ENCODE measurements at regions of chr1 and their contacts with region 1.

Region 1: DNA sequence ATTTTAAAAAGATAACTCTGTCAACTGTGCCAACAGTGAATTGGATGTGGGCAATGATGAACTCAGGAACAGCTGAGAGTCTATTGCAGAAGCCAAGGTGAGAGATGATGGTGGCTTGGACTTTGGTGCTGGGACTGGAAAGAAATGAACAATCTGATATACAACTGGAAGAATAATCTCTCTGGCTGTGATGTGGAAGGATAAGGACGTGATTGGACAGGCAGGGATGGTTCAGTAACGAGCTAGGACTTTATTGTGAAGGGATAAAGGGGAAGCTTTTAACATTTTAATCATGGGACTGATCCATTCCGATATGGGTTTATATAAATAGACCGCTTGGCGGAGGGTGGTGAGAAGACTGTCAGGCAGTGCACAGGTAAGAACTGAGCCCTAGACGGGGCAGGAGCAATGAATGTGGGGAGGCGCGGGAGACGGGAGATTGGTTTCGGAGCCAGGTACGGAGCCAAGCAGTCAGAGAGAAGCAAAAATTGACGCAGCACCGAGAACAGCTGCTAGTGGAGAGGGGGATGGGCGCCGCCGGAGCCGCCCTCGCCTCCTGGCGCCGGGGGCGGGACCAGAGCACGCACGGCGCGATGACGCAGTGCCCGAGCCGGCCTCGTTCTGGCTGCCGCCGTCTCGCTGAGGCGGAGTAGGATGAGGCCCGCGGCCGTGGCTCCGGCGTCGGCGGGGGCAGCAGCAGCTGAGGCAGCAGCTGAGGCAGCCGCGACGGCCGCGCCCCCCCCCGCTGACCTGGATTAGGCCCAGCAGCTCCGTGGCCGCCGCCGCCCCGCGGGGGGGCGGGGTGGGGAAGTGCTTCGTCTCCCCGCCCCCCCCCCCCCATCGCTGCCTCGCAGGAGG is at the start of gene RNF11:
- DNase-seq: peak; percentile 90
- H3K4me3 Mint-ChIP-seq: peak within 1 kb of the TSS; percentile 96
- H3K27ac Mint-ChIP-seq: peak within 1 kb of the TSS; percentile 88
- H3K4me1 Mint-ChIP-seq: peaks cover 13% of the 10 kb centered on the region
- H3K27me3 Mint-ChIP-seq: peaks cover 2% of the 10 kb centered on the region
- total RNA-seq, gene RNF11: 28.4 and 29.6 TPM in 2 replicates

Region 2: DNA sequence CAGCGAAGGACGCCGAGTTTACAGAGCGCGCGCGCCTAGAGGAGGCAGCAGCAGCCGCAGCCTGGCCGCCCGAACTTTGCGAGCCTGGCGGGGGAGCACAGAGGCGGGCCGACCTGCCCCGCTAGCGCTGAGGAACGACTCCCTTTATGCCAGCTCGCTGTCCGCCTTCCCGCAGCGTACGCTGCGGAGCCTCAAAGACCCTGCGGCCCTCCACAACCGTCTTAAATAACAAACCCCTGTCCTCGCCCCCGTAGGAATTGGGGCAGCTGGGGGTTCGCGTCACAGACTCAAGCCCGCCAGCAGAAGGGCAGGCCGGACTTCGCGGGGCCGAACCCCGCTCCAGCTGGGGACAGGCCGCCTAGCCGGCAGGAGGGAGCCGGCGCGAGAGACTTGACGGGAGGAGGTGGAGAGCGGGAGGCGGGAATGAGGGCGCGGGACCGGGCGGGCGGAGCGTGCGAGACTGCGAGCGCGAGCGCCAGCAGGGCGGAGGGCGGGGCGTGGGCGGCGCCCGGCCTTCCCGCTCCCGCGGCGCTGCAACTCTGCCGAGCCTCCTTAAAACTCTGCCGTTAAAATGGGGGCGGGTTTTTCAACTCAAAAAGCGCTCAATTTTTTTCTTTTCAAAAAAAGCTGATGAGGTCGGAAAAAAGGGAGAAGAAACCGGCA is 267.6 kb before region 1 on chr1:
- intact Hi-C with region 1: loop called (anchors 5 kb)
- DNase-seq: peak; percentile 82
- H3K4me3 Mint-ChIP-seq: peak overlapping the region; percentile 99
- H3K27ac Mint-ChIP-seq: peak overlapping the region; percentile 98
- H3K4me1 Mint-ChIP-seq: peaks cover 39% of the 10 kb centered on the region
- H3K27me3 Mint-ChIP-seq: peaks cover 10% of the 10 kb centered on the region

Region 3: DNA sequence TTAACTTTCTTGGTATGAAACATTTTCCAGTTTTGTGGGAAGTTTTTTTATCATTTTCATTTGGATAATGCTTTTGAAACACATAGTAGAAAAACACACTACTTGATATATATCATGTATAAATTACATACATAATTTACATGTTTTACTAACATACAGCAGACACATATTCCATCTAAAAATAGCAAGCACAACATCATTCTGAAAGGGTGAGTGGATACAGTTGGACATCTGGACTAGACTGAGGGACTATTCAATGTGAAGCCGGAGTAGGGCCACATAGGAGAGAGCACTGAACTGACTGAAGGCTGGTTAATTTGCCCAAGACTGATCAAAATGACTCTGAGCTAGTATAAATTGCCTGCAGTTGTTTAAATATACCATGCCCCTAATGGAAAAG is 254.2 kb before region 1 on chr1:
- intact Hi-C with region 1: no loop called
- DNase-seq: no peak
- H3K4me3 Mint-ChIP-seq: no peak overlapping the region
- H3K27ac Mint-ChIP-seq: no peak overlapping the region
- H3K4me1 Mint-ChIP-seq: peaks cover 15% of the 10 kb centered on the region
- H3K27me3 Mint-ChIP-seq: peaks cover 61% of the 10 kb centered on the region

Region 4: DNA sequence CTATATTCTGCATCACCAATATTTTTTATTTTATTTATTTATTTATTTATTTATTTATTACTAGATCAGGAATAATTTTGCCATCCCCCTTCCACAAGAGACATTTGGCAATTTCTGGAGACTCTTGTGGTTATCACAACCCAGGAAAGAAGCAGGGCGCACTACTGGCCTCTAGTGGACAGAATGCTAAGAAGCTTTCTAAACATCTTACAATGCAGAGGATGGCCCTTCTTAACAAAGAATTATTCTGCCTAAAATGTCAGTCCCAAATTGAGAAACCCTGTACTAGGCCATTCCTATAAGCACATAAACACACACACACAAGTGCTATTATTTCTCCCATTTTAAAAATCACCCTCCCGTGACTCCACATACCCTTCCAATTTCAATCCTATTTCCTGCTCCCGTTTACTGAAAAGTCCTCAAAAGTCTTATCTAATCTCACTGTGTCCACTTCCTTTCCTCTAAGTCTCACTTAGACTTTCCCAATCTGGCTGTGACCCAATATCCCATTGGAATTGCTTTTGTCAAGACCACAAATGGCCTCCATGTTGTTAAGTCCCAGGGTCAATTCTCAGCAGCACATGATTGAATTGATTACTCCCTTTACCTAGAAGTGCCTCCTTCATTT is 43.6 kb before region 1 on chr1:
- intact Hi-C with region 1: loop called (anchors 2 kb)
- DNase-seq: peak; percentile 19
- H3K4me3 Mint-ChIP-seq: no peak overlapping the region
- H3K27ac Mint-ChIP-seq: no peak overlapping the region
- H3K4me1 Mint-ChIP-seq: no peaks in the 10 kb centered on the region
- H3K27me3 Mint-ChIP-seq: peaks cover 17% of the 10 kb centered on the region

Region 5: GRCh38 chr1:51284487-51284954 is 48.6 kb after region 1 on chr1:
- intact Hi-C with region 1: loop called (anchors 5 kb)
- DNase-seq: no peak
- H3K4me3 Mint-ChIP-seq: no peak overlapping the region
- H3K27ac Mint-ChIP-seq: peak overlapping the region; percentile 10
- H3K4me1 Mint-ChIP-seq: peaks cover 24% of the 10 kb centered on the region
- H3K27me3 Mint-ChIP-seq: peaks cover 4% of the 10 kb centered on the region

Region 6: DNA sequence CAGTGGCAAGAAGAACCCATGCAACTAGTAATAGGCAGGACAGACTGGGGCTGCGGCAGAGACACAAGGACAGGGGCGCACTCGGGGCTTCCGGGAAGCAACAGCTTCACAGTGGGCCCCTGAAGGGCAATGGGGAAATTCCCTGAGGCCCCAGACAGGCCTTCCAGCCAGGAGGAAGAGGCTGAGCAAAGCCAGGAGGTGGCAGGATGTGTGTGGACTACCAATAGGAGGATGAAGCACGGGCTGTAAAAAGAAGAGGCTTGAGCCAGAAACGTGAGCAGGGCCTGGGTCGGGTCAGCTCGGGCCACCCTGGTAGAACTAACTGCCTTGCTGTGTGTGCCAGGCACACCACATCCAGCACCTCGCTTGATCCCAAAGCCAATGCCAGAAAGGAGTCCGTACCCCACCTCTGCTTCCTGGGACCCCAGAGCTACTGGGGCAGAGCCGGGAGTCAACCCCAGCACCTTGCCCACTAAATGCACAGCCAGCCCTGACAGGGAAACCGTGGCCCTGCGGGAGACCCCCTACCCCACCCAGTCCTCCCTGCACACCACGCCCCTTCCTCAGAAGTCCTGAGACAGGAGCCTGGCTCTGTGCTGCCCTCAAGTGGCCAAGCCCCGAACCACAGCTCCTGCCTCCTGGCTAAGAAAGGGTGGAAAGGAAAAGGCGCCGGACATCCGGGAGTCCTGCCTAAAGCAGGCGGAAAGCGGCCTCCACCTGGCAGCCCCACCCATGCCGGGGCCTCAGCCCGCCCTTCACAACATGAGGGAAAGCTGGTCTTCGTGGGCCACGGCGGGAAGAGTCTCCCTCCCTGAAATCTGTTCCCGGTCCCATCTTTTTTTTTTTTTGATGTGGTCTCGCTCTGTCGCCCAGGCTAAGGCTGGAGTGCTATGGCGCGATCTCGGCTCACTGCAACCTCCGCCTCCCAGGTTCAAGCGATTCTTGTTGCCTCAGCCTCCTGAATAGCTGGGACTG is 60.8 kb after region 1 on chr1:
- intact Hi-C with region 1: loop called (anchors 2 kb)
- DNase-seq: peak; percentile 69
- H3K4me3 Mint-ChIP-seq: peak overlapping the region; percentile 69
- H3K27ac Mint-ChIP-seq: peak overlapping the region; percentile 76
- H3K4me1 Mint-ChIP-seq: peaks cover 17% of the 10 kb centered on the region
- H3K27me3 Mint-ChIP-seq: peaks cover 2% of the 10 kb centered on the region

Region 7: GRCh38 chr1:51729156-51729823 is 493.4 kb after region 1 on chr1:
- intact Hi-C with region 1: loop called (anchors 5 kb)
- DNase-seq: peak; percentile 94
- H3K4me3 Mint-ChIP-seq: peak overlapping the region; percentile 84
- H3K27ac Mint-ChIP-seq: peak overlapping the region; percentile 88
- H3K4me1 Mint-ChIP-seq: peaks cover 24% of the 10 kb centered on the region
- H3K27me3 Mint-ChIP-seq: no peaks in the 10 kb centered on the region

Region 8: GRCh38 chr1:52033190-52034049 is 797.5 kb after region 1 on chr1 and contains the start of gene KTI12:
- intact Hi-C with region 1: loop called (anchors 10 kb)
- DNase-seq: peak; percentile 84
- H3K4me3 Mint-ChIP-seq: peak within 1 kb of the TSS; percentile 93
- H3K27ac Mint-ChIP-seq: peak within 1 kb of the TSS; percentile 89
- H3K4me1 Mint-ChIP-seq: peaks cover 39% of the 10 kb centered on the region
- H3K27me3 Mint-ChIP-seq: no peaks in the 10 kb centered on the region
- total RNA-seq, gene KTI12: 21.6 and 22.4 TPM in 2 replicates